ENCODE measurements at regions of chr18 and their contacts with region 1.

Region 1: GRCh38 chr18:70195852-70196434 is 9.5 kb downstream of the RTTN start:
- DNase-seq: peak; percentile 37
- H3K4me3 Mint-ChIP-seq: no peak overlapping the region
- H3K27ac Mint-ChIP-seq: no peak overlapping the region
- H3K4me1 Mint-ChIP-seq: no peaks in the 10 kb centered on the region
- H3K27me3 Mint-ChIP-seq: no peaks in the 10 kb centered on the region

Region 2: GRCh38 chr18:70181015-70181414 is 14.9 kb before region 1 on chr18:
- CTCF ChIA-PET with region 1: interaction called, 14 read pairs
- DNase-seq: no peak
- H3K4me3 Mint-ChIP-seq: no peak overlapping the region
- H3K27ac Mint-ChIP-seq: no peak overlapping the region
- H3K4me1 Mint-ChIP-seq: peaks cover 6% of the 10 kb centered on the region
- H3K27me3 Mint-ChIP-seq: no peaks in the 10 kb centered on the region

Region 3: DNA sequence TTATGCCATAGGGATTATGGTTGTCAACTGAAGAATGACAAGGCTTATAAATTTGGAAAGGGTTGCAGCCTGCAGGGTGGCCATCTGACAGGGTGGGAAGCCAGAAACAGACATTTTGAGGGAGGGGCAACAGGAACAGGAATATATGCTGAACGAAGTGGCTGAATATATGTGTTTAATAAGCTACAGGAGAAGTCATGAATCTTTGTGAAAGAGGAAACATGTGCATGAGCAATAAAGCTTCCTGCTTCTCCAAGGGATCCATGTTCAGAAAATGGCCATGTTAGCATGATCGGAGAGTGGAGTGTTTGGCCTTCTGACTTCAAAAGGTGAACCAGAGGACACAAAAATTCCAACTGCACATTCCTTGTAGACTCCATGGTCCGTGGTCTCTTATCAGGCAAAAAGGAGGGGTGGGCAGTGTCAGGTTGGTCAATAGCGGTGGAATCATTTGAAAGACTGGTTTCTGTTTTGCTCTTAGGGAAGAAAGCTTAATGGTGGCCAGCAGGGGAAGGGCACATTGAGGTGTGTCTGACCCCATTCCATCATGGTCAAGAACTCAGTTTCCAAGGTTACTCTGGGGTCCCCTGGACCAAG is 237.0 kb after region 1 on chr18:
- CTCF ChIA-PET with region 1: interaction called, 28 read pairs
- DNase-seq: no peak
- H3K4me3 Mint-ChIP-seq: no peak overlapping the region
- H3K27ac Mint-ChIP-seq: no peak overlapping the region
- H3K4me1 Mint-ChIP-seq: no peaks in the 10 kb centered on the region
- H3K27me3 Mint-ChIP-seq: no peaks in the 10 kb centered on the region

Region 4: GRCh38 chr18:70454704-70455322 is 258.9 kb after region 1 on chr18:
- CTCF ChIA-PET with region 1: interaction called, 24 read pairs
- DNase-seq: peak; percentile 41
- H3K4me3 Mint-ChIP-seq: no peak overlapping the region
- H3K27ac Mint-ChIP-seq: no peak overlapping the region
- H3K4me1 Mint-ChIP-seq: no peaks in the 10 kb centered on the region
- H3K27me3 Mint-ChIP-seq: peaks cover 1% of the 10 kb centered on the region

Measured in activated naive CD4-positive, alpha-beta T cell treated with anti-CD3 and anti-CD28 coated beads, Interleukin-2, amount 10 ng/mL, durations not matched to agents 7 days and 5 days (primary cell).